ENCODE measurements at regions of chr10 and their contacts with region 1.

Region 1: DNA sequence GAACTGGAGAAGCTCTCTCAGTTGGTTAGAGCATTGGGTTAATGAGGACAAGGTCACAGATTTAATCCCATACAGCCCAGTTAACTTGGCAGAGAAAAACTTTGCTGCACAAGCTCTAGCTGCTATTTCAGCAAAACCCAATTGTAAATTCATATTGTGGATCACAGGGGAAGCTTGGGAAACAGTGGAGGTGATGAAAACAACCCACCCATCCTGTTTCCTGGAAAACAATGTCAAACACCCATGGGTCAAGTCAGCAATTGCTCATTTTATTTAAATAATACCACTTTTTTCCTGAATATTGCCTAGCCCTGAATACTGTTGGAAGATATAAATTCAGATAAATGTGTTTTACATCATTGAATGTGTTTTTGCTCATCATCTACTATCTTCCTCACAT is 900.6 kb upstream of the LRRTM3 start:
- DNase-seq: no peak

Region 2: DNA sequence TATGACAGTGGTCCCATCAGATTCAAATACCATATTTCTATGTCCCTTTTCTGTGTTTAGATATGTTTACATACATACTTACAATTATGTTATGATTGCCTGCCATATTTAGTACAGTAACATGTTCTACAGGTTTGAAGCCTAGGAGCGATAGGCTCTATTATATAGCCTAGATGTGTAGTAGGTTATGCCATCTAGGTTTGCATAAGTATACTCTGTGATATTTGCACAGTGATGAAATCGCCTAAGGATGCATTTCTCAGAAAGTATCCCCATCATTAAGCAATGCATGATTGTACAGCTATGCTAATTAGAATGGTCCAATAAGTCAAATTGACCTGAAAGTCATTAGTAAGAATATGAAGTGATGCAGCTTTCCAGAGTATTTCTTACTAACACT is 271.1 kb before region 1 on chr10:
- intact Hi-C with region 1: no loop called
- DNase-seq: no peak

Region 3: DNA sequence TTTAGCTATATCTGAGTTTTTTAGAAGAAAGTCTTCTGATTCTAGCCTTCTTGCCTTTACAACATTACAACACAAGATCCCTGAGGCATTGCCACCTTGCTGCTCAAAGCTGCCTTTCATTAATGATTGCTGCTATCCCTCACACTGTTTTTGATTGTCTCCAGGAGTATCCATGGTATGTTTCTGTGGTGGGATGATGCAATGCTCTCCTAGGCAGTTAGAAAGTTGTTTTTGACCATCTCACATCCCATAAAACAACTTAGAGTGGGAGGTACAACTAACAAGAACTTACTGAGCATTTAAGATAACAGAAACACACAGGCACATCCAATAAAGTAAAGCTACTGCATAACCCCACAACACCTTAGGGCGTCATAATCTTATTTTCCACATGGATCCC is 255.4 kb before region 1 on chr10:
- intact Hi-C with region 1: loop called (anchors 10 kb)
- DNase-seq: no peak

Measured in cardiac septum (tissue), 1 donor.